Activated CD4-positive, alpha-beta memory T cell treated with anti-CD3 and anti-CD28 coated beads, Interleukin-2, amount 10 ng/mL, durations not matched to agents 7 days and 5 days (primary cell): ENCODE measurements at regions of chr11 and their contacts with region 1.

Region 1: DNA sequence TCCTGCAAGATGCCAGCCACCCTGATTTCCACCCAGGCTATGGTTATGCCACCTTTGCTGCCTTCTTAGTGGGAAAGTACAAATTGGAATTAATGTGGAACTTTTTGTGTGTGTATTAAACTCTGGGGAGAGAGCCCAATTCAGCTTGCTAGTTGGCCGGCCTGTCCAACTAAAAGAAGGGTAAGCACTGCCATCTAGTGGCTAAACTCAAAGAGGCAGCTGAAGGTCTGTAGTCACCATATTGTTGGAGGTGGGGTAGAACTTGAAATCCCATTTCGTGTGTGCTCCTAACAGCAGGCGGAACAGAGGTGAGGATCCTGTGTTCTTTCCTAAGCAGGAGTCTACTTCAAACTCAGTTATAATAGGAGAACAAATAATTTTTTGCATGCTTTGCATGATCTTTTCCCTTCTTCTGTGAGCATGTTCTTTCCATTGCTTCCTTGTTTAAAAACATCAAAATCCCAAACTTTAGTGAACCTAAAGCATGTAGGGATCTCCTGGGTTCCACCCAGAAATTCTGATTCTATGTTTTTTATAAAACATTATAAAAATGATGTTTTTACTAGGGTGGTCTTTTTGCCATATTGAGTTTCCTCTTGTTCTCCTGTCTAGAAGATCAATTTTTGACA is 138.8 kb upstream of the SORL1-AS1 start:
- DNase-seq: peak; percentile 73
- H3K4me3 Mint-ChIP-seq: no peak overlapping the region
- H3K27ac Mint-ChIP-seq: peak overlapping the region; percentile 47
- H3K4me1 Mint-ChIP-seq: peaks cover 28% of the 10 kb centered on the region
- H3K27me3 Mint-ChIP-seq: no peaks in the 10 kb centered on the region

Region 2: GRCh38 chr11:121249039-121249663 is 342.4 kb before region 1 on chr11:
- CTCF ChIA-PET with region 1: interaction called, 17 read pairs
- POLR2A ChIA-PET with region 1: no interaction called
- DNase-seq: no peak
- H3K4me3 Mint-ChIP-seq: no peak overlapping the region
- H3K27ac Mint-ChIP-seq: no peak overlapping the region
- H3K4me1 Mint-ChIP-seq: peaks cover 4% of the 10 kb centered on the region
- H3K27me3 Mint-ChIP-seq: peaks cover 12% of the 10 kb centered on the region

Region 3: DNA sequence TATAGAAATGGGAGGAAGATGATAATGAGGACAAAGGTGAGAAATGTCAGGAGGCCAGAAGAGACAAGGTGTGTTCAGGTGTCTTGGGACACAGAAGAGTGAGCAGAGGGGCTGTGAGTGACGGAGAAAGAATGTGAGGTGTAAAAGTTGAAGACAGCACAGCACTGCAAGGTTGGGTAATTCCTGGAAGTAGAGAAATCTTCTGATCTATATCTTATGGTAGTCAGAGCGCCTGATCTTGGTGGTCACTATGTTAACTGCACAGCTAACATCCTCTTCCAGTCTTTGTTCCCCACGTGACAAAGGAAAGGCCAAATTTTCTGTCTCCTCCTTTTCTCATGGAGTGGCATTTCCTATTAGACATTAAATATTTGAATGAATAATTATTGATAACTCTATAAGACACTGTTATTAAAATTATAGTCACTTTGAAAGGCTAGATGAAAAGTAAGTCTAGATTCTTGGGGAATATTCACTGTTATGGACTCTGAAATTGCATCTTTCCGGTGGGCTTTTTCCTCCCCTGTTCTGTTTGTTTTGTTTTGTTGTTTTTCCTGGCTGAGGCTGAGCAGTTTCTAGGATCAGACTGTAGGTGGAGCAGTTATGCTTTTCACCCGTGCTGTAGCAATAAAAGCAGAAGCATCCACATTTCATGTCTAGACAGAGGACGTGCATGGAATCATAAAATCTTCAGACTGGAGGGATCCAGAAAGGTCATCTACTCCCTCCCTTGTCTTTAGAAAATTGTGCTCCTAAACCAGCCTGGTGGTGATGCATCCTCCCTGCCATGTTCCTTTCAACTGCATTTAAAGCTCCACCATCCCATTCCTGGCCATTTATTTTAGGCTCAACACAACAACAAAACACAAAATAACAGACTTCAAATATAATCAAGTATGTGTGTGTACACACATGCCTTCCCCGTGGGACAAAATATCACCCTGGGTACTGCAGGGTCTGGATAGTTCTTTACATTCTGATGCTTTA is 272.4 kb before region 1 on chr11:
- CTCF ChIA-PET with region 1: interaction called, 33 read pairs
- POLR2A ChIA-PET with region 1: no interaction called
- DNase-seq: no peak
- H3K4me3 Mint-ChIP-seq: no peak overlapping the region
- H3K27ac Mint-ChIP-seq: no peak overlapping the region
- H3K4me1 Mint-ChIP-seq: peaks cover 25% of the 10 kb centered on the region
- H3K27me3 Mint-ChIP-seq: peaks cover 4% of the 10 kb centered on the region

Region 4: DNA sequence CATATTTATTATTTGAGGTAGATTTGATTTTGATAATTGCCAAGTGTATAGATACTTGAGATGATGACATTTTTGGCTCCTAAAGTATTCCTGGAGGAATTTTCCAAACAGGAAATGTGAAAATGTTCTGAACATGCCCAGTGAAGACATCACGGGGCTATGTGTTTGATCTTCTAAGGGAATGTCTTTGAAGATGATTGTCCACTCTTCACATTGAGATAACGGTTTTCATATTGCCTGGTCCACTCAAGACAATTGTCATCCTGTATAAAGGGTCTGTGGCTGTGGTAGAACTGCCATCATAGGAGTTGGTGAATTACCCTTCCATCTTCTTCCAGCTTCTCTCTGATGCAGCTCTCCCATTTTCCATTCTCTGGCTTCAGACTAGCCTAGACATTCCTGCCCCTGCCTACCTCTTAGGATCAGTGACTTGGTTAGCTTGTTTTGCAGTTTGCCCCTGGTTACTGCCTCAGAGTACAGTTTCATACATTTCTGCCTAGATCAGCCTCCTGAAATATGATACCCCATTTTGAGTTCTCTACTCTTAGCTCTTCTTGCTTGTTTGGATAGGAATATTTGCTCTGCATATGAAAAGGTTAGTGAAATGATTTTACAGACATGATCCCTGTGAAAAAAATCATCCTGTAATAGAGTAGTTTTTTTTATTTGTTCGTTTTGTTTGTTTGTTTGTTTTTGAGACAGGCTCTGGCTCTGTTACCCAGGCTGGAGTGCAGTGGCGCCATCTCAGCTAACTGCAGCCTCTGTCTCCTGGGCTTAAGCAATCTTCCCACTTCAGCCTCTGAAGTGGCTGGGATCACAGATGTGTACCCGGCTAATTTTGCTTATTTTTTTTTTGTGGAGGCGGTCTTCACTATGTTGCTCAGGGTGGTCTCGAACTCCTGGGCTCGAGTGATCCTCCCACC is 27.4 kb before region 1 on chr11:
- CTCF ChIA-PET with region 1: no interaction called
- POLR2A ChIA-PET with region 1: no interaction called
- DNase-seq: no peak
- H3K4me3 Mint-ChIP-seq: no peak overlapping the region
- H3K27ac Mint-ChIP-seq: no peak overlapping the region
- H3K4me1 Mint-ChIP-seq: no peaks in the 10 kb centered on the region
- H3K27me3 Mint-ChIP-seq: no peaks in the 10 kb centered on the region